ENCODE measurements at regions of chr5 and their contacts with region 1.

Region 1: DNA sequence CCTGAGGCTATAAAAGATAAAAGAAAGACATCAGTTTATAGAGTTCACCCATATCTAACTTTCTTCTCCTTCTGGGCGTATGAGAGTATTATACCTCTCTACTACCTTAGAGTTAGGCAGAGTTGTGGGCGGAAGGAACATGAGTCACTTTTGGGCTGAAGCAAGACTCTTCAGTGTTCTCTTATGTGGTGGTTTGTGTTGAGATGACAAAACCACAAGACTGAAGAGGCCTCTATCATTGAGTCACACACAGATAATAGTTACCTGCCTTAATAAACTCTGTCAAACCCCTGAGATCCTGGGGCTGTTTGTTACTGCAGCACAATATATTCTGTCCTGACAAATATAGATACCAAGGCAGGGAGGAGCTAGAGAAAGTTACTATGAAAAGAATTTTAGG is 184.2 kb downstream of the EFNA5 start:
- DNase-seq: peak; percentile 71
- H3K4me3 Mint-ChIP-seq: no peak overlapping the region
- H3K27ac Mint-ChIP-seq: no peak overlapping the region
- H3K4me1 Mint-ChIP-seq: peaks cover 16% of the 10 kb centered on the region
- H3K27me3 Mint-ChIP-seq: peaks cover 3% of the 10 kb centered on the region

Region 2: GRCh38 chr5:107263387-107264018 is 223.0 kb before region 1 on chr5:
- CTCF ChIA-PET with region 1: no interaction called
- POLR2A ChIA-PET with region 1: no interaction called
- intact Hi-C with region 1: loop called (anchors 5 kb)
- DNase-seq: no peak
- H3K4me3 Mint-ChIP-seq: no peak overlapping the region
- H3K27ac Mint-ChIP-seq: no peak overlapping the region
- H3K4me1 Mint-ChIP-seq: peaks cover 4% of the 10 kb centered on the region
- H3K27me3 Mint-ChIP-seq: no peaks in the 10 kb centered on the region

Region 3: DNA sequence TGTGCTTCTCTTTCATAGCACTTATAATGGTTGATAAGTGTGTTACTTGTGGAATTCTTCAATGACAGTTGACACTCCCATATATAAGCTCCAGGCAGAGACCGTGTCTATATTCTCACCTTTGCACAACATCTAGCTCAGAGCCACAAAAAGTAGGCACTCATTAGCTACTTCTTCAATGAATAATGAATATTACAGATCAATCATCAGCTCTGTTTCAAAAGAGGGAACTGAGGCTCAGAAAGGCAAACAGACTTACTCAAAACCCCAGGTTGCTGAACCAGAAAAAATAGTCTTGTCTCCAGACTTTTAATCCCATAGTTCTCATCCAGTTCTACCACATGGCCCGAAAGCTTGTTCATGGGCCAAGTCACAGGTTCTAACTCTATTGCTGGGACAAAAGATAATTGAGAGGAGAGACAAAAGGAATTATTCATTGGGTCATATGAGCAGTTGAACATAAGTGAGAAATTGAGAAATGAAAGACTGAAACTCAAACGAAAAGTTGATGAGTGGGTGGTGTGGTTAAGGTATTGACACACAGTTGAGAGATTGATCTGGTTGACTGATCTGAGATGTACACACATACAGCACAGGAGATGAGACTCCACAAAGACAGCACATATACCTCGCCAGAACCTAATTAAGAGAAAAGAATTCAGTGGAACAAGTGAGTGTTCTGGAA is 197.3 kb before region 1 on chr5:
- CTCF ChIA-PET with region 1: no interaction called
- POLR2A ChIA-PET with region 1: no interaction called
- intact Hi-C with region 1: loop called (anchors 2 kb)
- DNase-seq: no peak
- H3K4me3 Mint-ChIP-seq: no peak overlapping the region
- H3K27ac Mint-ChIP-seq: no peak overlapping the region
- H3K4me1 Mint-ChIP-seq: peaks cover 11% of the 10 kb centered on the region
- H3K27me3 Mint-ChIP-seq: peaks cover 10% of the 10 kb centered on the region

Region 4: DNA sequence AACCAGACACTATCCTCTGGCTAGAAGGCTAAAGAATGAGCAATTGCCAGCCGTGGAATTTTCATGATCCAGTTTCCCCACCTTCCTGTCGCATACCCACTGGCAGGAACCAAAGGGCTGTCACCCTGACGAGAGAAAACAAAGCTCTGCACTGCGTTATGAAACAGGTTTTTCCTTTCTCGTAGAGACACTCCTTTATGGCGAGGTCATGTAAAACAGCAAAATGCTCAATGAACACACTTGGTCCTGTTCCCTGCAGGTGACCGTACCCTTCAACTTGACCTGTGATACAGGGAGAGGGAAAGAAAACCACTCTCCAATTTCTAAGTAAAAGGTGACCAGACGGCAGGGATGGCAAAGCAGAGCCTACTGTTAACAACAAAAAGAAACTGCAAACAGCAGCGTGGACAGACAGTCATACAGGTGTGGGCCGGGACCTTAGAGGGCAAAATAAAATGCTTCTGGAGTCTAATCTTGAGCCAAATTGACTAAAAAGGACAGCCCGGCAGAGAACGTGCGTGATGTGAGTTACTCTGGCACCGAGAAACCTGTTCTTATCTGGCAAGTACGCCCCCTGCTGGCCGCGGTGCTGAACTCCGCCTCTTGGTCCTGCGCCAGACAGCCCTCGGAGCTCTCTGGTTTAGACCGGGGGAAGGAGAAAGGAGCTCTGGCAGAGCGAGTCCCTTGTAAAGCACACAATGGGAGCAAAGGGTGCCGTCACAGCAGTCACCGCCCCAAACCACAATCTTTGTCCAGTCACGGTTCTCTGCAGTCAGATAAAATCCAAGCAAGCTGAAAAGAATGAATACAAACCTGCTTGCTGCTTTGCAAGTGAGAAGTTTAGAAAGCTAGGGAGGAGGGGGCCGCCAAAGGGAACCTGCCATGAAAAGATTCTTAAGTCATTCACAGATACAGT is 85.4 kb after region 1 on chr5:
- CTCF ChIA-PET with region 1: interaction called, 3 read pairs
- POLR2A ChIA-PET with region 1: no interaction called
- intact Hi-C with region 1: loop called (anchors 5 kb)
- DNase-seq: peak; percentile 91
- H3K4me3 Mint-ChIP-seq: peak overlapping the region; percentile 71
- H3K27ac Mint-ChIP-seq: no peak overlapping the region
- H3K4me1 Mint-ChIP-seq: peaks cover 16% of the 10 kb centered on the region
- H3K27me3 Mint-ChIP-seq: peaks cover 17% of the 10 kb centered on the region

Region 5: GRCh38 chr5:107673368-107674136 is 187.1 kb after region 1 on chr5:
- CTCF ChIA-PET with region 1: no interaction called
- POLR2A ChIA-PET with region 1: no interaction called
- intact Hi-C with region 1: loop called (anchors 5 kb)
- DNase-seq: peak; percentile 86
- H3K4me3 Mint-ChIP-seq: peak overlapping the region; percentile 59
- H3K27ac Mint-ChIP-seq: no peak overlapping the region
- H3K4me1 Mint-ChIP-seq: peaks cover 29% of the 10 kb centered on the region
- H3K27me3 Mint-ChIP-seq: peaks cover 52% of the 10 kb centered on the region

Measured in activated CD4-positive, alpha-beta memory T cell treated with anti-CD3 and anti-CD28 coated beads for 36 hours (primary cell).